ENCODE measurements at regions of chr5 and their contacts with region 1.

Region 1: GRCh38 chr5:57761491-57761890 is 278.9 kb upstream of the ACTBL2 start:
- DNase-seq: no peak
- ATAC-seq: no peak
- H3K4me3 ChIP-seq: no peak overlapping the region
- H3K27ac ChIP-seq: no peak overlapping the region
- H3K4me1 ChIP-seq: no peaks in the 10 kb centered on the region
- H3K27me3 ChIP-seq: no peaks in the 10 kb centered on the region
- CTCF ChIP-seq: no peak
- POLR2A ChIP-seq: no peak

Region 2: GRCh38 chr5:57642066-57642465 is 119.4 kb before region 1 on chr5:
- intact Hi-C with region 1: loop called in 1 of 10 experiments (anchors 10 kb)
- DNase-seq: no peak
- ATAC-seq: no peak
- H3K4me3 ChIP-seq: no peak overlapping the region
- H3K27ac ChIP-seq: no peak overlapping the region
- H3K4me1 ChIP-seq: no peaks in the 10 kb centered on the region
- H3K27me3 ChIP-seq: no peaks in the 10 kb centered on the region
- CTCF ChIP-seq: no peak
- POLR2A ChIP-seq: no peak

Region 3: DNA sequence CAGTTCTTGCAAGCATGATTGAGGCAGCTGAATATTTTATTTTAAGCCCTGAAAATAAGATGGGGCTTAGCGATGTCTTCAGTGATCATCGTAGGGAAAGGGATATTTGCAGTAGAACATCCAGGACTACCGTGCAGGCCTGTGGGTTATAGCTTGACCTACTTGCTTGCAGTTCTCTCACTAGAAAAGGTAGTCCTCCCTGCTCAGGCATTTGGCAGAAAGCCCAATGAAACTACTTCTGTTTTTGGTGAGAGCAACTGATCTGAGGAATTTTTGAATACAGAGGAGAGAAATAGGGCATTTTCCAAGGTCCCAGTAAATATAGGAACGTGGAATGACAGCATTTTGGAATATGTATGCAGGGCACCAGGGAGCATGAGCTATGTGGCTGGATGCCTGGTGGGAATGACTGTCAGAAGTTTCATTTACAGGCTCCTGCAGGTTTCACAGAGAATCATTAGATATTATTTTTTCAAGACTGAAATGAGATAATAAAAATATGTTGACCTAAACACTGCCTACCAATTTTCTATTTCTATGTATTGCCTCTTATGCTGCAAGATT is 139.0 kb after region 1 on chr5:
- intact Hi-C with region 1: no loop called
- DNase-seq: no peak
- ATAC-seq: no peak
- H3K4me3 ChIP-seq: no peak overlapping the region
- H3K27ac ChIP-seq: no peak overlapping the region
- H3K4me1 ChIP-seq: peaks cover 0 to 27% (median 0%) of the 10 kb centered on the region in 12 donors
- H3K27me3 ChIP-seq: no peaks in the 10 kb centered on the region
- CTCF ChIP-seq: no peak
- POLR2A ChIP-seq: no peak